ENCODE measurements at regions of chr2 and their contacts with region 1.

Region 1: DNA sequence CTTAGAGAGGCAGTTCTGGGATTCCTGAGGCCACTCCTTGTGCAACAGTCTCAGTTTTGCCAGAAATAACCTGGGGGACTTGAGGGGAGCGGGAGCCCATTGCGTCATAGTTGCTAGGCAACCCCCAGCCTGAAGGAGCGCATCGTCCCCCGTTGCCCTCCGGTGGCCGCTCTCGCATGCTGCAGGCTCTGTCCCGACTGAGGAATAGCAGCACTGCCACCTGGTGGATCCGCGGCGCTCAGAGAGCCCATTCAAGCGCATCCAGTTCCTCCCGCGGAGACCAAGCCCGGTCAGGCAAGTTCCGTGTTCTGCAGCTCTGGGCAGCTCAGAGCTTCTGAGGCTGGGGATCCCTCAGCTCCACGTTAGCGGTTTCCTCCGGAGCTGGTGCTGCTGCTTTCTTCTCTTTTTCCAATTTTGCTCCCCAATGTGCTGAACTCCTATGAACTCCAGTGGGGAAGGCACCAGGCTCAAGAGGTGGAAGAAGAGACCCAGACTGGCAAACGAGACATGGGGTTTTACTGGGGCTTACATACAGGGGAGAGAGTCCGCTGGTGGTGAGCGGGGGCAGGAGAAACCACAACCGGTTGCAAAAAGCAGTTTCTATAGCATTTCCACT is 15.1 kb downstream of the SLC4A3 start:
- DNase-seq: peak; percentile 97
- ATAC-seq: peak; percentile 75
- H3K4me3 ChIP-seq: no peak overlapping the region
- H3K27ac ChIP-seq: no peak overlapping the region
- H3K4me1 ChIP-seq: peaks cover 27% of the 10 kb centered on the region
- H3K27me3 ChIP-seq: no peaks in the 10 kb centered on the region
- CTCF ChIP-seq: peak; percentile 97

Region 2: DNA sequence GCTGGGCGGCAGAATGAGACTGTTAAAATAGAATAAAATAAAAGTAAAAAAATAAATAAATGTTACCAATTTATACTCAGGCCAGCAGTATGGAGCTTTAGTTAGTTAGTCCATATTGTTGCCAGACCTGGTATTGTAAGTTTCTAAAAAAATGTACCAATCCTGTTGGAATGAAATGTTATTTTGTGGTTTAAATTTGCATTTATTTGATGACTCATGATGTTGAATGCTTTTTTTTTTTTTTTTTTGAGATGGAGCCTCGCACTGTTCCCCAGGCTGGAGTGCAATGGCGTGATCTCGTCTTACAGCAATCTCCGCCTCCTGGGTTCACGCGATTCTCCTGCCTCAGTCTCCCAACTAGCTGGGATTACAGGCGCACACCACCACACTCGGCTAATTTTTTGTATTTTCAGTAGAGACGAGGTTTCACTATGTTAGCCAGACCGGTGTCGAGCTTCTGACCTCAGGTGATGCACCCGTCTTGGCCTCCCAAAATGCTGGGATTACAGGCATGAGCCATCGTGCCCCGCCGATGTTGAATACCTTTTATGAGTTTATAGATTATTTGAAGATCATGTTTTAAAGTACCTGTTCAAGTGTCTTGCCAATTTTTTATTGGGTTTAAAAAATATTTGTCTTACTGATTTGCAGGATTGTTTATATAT is 327.6 kb before region 1 on chr2:
- CTCF ChIA-PET with region 1: no interaction called
- POLR2A ChIA-PET with region 1: no interaction called
- intact Hi-C with region 1: no loop called
- DNase-seq: peak; percentile 36
- ATAC-seq: no peak
- H3K4me3 ChIP-seq: no peak overlapping the region
- H3K27ac ChIP-seq: no peak overlapping the region
- H3K4me1 ChIP-seq: no peaks in the 10 kb centered on the region
- H3K27me3 ChIP-seq: 0 out of 2 replicates have a peak, but pooled peaks cover 3% of the 10 kb centered on the region
- CTCF ChIP-seq: no peak

Region 3: GRCh38 chr2:219543601-219544358 is 98.8 kb before region 1 on chr2 and contains the starts of genes CHPF and TMEM198:
- CTCF ChIA-PET with region 1: no interaction called
- POLR2A ChIA-PET with region 1: no interaction called
- intact Hi-C with region 1: loop called (anchors 1 kb)
- DNase-seq: peak; percentile 98
- ATAC-seq: peak; percentile 78
- H3K4me3 ChIP-seq: peak within 1 kb of the TSS; percentile 91
- H3K27ac ChIP-seq: peak within 1 kb of the TSS; percentile 56
- H3K4me1 ChIP-seq: peaks cover 7% of the 10 kb centered on the region; the same call in 1 of the 2 replicates
- H3K27me3 ChIP-seq: no peaks in the 10 kb centered on the region
- CTCF ChIP-seq: no peak
- total RNA-seq, gene CHPF: 139 and 210 TPM in 2 replicates
- total RNA-seq, gene TMEM198: 1.1 and 5.2 TPM in 2 replicates

Region 4: GRCh38 chr2:219571311-219572236 is 71.0 kb before region 1 on chr2 and contains the start of gene OBSL1:
- CTCF ChIA-PET with region 1: no interaction called
- POLR2A ChIA-PET with region 1: no interaction called
- intact Hi-C with region 1: loop called (anchors 2 kb)
- DNase-seq: peak; percentile 90
- ATAC-seq: peak; percentile 61
- H3K4me3 ChIP-seq: peak within 1 kb of the TSS; percentile 72
- H3K27ac ChIP-seq: peak within 1 kb of the TSS; percentile 68
- H3K4me1 ChIP-seq: peaks cover 28% of the 10 kb centered on the region
- H3K27me3 ChIP-seq: no peaks in the 10 kb centered on the region
- CTCF ChIP-seq: no peak
- total RNA-seq, gene OBSL1: 122 and 148 TPM in 2 replicates

Region 5: DNA sequence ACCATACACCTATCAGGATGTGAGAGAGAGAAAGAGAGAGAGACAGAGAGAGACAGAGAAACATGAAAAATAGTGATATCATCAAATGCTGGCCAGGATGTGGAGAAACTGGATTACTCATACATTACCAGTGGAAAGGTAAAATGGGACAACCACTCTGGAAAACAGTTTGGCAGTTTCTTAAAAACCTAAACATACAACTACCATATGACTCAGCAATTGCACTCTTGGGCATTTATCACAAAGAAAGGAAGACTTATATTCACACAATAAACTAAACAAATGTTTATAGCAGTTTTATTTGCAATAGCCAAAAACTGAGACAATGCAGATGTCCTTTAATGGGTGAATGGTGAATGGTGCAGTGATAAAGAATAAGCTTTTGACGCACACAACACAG is 14.0 kb after region 1 on chr2:
- CTCF ChIA-PET with region 1: interaction called, 4 read pairs
- POLR2A ChIA-PET with region 1: no interaction called
- intact Hi-C with region 1: loop called (anchors 1 kb)
- DNase-seq: peak; percentile 93
- ATAC-seq: peak; percentile 87
- H3K4me3 ChIP-seq: no peak overlapping the region
- H3K27ac ChIP-seq: peak overlapping the region; percentile 93
- H3K4me1 ChIP-seq: peaks cover 32% of the 10 kb centered on the region
- H3K27me3 ChIP-seq: no peaks in the 10 kb centered on the region
- CTCF ChIP-seq: no peak

Region 6: GRCh38 chr2:219783359-219783975 is 140.9 kb after region 1 on chr2:
- CTCF ChIA-PET with region 1: no interaction called
- POLR2A ChIA-PET with region 1: no interaction called
- intact Hi-C with region 1: no loop called
- DNase-seq: no peak
- ATAC-seq: no peak
- H3K4me3 ChIP-seq: no peak overlapping the region
- H3K27ac ChIP-seq: no peak overlapping the region
- H3K4me1 ChIP-seq: no peaks in the 10 kb centered on the region
- H3K27me3 ChIP-seq: 0 out of 2 replicates have a peak, but pooled peaks cover 14% of the 10 kb centered on the region
- CTCF ChIP-seq: no peak

Region 7: GRCh38 chr2:219829667-219830352 is 187.2 kb after region 1 on chr2:
- CTCF ChIA-PET with region 1: no interaction called
- POLR2A ChIA-PET with region 1: no interaction called
- intact Hi-C with region 1: no loop called
- DNase-seq: no peak
- ATAC-seq: no peak
- H3K4me3 ChIP-seq: no peak overlapping the region
- H3K27ac ChIP-seq: no peak overlapping the region
- H3K4me1 ChIP-seq: no peaks in the 10 kb centered on the region
- H3K27me3 ChIP-seq: no peaks in the 10 kb centered on the region
- CTCF ChIP-seq: no peak

Measured in PC-3 (cell line).